ENCODE measurements at regions of chr15 and their contacts with region 1.

Region 1: GRCh38 chr15:74842581-74843444 is at the start of gene ULK3:
- DNase-seq: peak; percentile 92 to 97 (median 97)
- ATAC-seq: peak; percentile 89 to 91
- H3K4me3 ChIP-seq: peak within 1 kb of the TSS; percentile 71
- H3K27ac ChIP-seq: peak within 1 kb of the TSS; percentile 71
- H3K4me1 ChIP-seq: peaks cover 2% of the 10 kb centered on the region
- H3K27me3 ChIP-seq: no peaks in the 10 kb centered on the region
- total RNA-seq, gene ULK3: 34.9 to 49.3 (median 45.9) TPM

Region 2: GRCh38 chr15:74889883-74890664 is 47.3 kb after region 1 on chr15 and contains the start of gene MPI:
- intact Hi-C with region 1: loop called in 1 of 4 experiments (anchors 10 kb)
- DNase-seq: peak; percentile 87 to 95 (median 93)
- ATAC-seq: peak; percentile 97
- H3K4me3 ChIP-seq: peak within 1 kb of the TSS; percentile 52
- H3K27ac ChIP-seq: peak within 1 kb of the TSS; percentile 40
- H3K4me1 ChIP-seq: peaks cover 11% of the 10 kb centered on the region
- H3K27me3 ChIP-seq: no peaks in the 10 kb centered on the region
- total RNA-seq, gene MPI: 39.1 to 59.8 (median 47.7) TPM

Measured in right cardiac atrium (tissue), 5 donors.